ENCODE measurements at regions of chr2 and their contacts with region 1.

Region 1: DNA sequence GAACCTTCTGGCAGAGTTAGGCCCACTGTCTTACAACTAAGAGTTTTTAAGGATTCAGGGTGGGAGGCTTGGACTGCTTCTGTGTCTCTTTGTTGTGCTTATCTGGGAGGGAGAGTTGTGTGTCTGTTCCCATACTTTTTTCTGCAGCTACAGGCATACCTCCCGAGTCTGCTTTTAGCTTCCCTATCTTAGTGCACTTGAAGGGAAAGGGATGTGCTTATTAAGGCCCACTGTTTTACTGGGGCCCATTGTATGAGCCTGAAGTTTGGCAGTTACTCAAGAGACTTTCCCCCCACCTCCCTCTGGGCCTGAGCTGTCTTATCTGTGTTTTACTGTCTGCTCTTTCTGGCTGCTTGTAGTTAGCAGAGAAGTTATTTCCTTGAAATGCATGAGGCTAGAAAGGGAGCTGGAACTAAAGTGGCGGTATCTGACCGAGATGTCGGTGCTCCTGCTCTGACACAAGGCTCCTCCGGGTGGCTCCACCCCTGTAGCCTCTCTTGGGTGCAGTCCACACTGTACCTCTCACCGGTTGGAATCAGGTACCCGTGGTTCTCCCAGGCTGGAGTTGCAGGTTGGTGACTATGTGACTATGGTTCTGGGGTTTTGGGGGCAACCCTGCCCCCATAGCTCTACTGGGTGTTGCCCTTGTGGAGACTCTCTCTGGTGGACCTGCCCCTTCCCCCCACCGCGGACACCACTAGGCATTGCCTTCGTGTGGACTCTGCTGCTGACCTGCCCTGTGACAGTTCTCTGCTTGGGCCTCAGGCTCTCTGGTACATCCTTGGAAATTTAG is 12.9 kb downstream of the UBR3 start:
- DNase-seq: peak; percentile 56 to 95 (median 74)
- ATAC-seq: peak; percentile 95
- H3K4me3 ChIP-seq: peak overlapping the region; percentile 19; the same call in 1 of the 2 replicates
- H3K27ac ChIP-seq: peak overlapping the region; percentile 78
- H3K4me1 ChIP-seq: peaks cover 36 to 37% of the 10 kb centered on the region in 2 experiments
- H3K27me3 ChIP-seq: no peaks in the 10 kb centered on the region
- CTCF ChIP-seq: peak; percentile 25 to 27 (median 27); a peak in 2 of 6 replicates
- EP300 ChIP-seq: peak; percentile 82
- POLR2A ChIP-seq: 0 out of 2 replicates have a peak, but pooled peaks have one; percentile 10
- RAD21 ChIP-seq: peak in 1 of 2 experiments; percentile 45; a peak in 2 of 4 replicates

Region 2: DNA sequence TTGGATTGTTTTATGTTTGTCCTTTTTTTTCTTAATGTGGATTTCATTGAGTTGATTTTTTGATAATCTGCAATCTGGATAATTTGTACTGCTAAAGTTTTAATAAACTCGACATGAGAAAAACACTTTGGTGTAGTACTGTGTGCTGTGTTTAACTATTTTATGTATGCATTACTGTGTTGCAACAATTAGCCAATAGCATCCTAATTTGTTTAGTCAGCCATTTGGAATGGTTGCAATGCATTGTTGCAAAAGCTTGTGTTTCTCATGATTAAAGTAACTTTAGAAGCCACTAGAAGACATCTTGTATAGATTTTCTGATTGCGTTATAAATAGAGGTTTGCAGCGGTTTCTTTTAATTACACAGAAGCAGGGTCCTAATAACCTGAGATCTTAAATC is 202.5 kb before region 1 on chr2:
- CTCF ChIA-PET with region 1: no interaction called
- POLR2A ChIA-PET with region 1: no interaction called
- in situ Hi-C with region 1: no loop called
- intact Hi-C with region 1: no loop called
- DNase-seq: no peak
- ATAC-seq: no peak
- H3K4me3 ChIP-seq: no peak overlapping the region
- H3K27ac ChIP-seq: no peak overlapping the region
- H3K4me1 ChIP-seq: no peaks in the 10 kb centered on the region
- H3K27me3 ChIP-seq: no peaks in the 10 kb centered on the region
- CTCF ChIP-seq: no peak
- EP300 ChIP-seq: no peak
- POLR2A ChIP-seq: no peak
- RAD21 ChIP-seq: no peak

Region 3: DNA sequence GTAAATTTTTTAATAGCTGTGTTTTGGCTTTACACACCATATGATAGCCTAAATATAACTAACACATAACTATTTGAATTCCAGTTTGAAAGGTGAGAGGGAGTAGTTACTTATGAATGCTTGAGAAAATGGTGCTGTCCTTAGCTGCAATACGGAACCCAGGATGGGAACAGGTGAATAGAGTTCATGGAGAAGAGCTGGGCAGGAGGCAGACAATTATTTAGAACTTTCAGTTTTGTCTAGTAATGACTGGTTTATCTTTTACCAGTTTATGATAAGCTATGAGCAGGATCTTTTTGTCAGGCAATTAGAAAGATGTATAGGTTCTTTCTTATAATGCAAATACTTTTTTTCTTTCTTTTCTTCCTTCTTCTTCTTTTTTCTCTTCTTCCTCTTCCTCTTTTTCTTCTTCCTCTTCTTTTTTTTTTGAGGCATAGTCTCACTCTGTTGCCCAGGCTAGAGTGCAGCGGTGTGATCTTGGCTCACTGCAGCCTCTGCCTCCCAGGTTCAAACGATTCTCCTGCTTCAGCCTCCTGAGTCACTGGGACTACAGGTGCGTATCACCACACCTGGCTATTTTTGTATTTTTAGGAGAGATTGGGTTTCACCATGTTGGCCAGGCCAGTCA is 13.0 kb after region 1 on chr2:
- CTCF ChIA-PET with region 1: no interaction called
- POLR2A ChIA-PET with region 1: interaction called, 17 read pairs
- in situ Hi-C with region 1: no loop called
- intact Hi-C with region 1: no loop called
- DNase-seq: no peak
- ATAC-seq: peak; percentile 43
- H3K4me3 ChIP-seq: no peak overlapping the region
- H3K27ac ChIP-seq: peak overlapping the region; percentile 53; the same call in 2 of the 3 replicates
- H3K4me1 ChIP-seq: peaks cover 8 to 10% of the 10 kb centered on the region in 2 experiments; a peak in 3 of 5 replicates
- H3K27me3 ChIP-seq: no peaks in the 10 kb centered on the region
- CTCF ChIP-seq: no peak
- EP300 ChIP-seq: no peak
- POLR2A ChIP-seq: no peak
- RAD21 ChIP-seq: no peak

Measured in K562 (cell line).